Left colon (tissue), 2 donors: ENCODE measurements at regions of chr20 and their contacts with region 1.

Region 1: DNA sequence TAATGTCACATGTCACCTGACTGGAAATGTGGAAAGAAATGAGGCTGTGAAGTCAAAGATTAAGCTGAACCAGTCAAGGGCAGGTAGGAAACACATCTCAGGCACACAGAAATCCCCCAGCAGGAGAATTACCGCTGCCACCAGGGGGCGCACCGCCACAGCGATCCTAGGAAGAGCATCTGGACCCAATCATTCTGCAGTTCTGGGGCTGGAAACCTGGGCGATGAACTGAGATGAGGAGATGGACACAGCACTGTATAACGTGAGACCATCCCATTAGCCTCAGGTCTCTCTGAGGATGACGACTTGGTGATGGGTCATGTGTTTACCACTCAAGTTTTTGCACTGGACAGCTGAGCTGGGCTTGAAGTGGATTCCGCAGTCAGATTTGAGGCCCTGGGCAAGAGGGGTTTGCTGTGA is 6.5 kb upstream of the SLC24A3 start:
- DNase-seq: peak; percentile 51 to 85
- ATAC-seq: peak; percentile 90

Region 2: GRCh38 chr20:18750735-18751134 is 455.3 kb before region 1 on chr20:
- intact Hi-C with region 1: no loop called
- DNase-seq: no peak
- ATAC-seq: no peak

Region 3: DNA sequence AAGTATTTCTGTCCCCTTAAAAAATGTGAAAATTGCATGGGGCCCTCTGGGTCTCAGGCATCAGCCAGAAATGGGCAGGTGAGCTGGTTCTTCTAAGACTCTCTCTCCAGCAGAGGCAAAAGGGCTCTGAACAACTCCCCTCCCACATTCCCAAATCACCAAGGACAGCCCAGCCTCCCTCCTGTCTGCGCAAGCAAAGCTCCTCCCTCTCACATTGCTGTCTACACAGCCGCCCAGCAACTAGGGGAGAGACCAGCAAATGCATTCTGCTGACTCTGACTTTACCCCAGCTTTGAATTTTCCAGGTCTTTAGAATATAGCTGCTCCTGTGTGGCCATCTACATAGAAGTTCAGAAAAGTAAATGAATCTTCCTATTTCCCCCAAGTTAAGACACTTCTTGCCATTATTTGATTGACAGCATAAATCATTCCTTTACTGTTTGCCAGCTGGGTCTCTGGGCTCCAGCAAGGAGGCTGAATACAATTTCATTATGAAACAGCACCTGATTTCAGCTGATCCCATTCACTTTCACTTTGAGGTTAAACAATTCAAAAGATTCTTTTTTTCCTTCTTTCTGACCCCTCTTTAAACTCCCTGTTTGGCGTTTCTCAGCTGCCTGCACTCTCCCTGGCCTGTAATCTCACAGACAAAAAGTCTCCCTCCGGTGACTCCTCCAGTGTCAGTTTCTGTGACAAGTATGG is 346.3 kb after region 1 on chr20:
- intact Hi-C with region 1: no loop called
- DNase-seq: no peak
- ATAC-seq: no peak

Region 4: DNA sequence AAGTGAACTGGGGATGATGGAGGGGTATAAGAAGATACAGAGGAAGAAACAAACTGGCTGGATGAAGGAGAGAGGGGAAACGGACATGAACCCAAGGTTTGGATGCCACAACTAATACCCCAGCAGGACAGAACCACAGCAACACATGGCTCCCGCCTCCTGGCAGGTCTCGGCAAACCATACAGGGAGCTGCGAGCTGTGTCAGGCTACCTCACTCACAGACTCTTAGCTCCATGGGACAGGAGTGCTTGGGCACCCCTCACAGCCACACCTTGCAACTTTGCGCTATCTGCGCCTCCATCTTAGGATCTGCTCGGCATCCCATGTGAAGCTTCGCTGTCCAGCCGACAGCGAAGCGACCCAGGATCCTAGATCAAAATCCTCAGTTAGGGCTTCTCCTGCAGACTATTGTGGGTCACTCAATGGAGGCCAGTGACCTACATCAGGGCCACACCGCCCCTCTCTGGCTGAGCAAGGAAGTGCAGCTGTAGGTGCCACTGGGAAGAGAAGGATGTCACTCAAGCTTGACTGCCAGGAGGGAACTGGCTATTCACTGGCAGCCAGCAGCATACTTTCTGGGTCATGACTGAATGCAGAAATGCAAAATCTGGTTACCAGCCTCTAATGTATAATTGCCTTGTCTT is 377.7 kb after region 1 on chr20:
- intact Hi-C with region 1: loop called in 1 of 2 experiments (anchors 5 kb)
- DNase-seq: peak; percentile 32 to 76
- ATAC-seq: peak; percentile 81

Region 5: DNA sequence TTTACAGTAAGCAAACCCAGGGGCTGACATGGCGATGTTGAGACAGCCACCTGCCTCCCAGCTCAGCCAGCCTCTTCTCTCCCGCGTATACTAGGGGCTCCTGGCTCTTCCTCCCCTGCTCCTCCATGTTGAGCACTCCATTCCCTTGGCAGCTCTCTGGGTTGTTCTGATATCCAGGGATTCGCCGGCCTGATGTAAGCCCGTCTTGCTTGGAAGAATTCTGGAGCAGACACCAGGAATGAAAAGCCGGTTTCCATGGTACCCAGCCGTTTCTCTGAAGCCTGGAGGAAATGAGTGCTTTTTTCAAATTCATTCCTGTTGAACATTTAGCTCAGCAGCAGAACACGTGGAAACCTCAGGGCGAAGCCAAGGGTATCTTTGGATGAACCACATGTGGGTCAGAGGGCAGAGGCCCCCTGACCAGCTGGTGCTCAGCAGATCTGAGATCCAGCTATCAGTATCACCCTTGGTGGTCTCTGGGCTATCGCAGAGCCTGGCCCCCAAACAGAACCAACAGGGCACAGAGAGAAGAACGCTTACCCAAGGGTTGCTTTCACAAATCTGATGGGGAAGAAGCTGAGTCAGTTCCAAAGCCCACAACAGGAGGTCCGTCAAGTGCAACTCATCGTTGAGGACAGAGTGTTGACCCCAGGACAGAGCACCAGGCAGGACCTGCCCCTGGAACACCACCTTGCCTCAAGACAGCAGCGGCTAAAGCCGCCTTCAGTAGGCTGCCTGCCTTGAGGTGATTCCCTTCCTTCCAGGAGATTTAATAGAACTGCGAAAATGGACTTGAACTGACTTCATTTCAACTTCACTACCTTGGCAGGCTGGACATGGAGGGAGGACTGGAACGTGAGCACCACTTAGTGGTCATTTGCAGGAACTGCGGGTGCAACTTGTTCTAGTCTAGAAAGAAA is 456.0 kb after region 1 on chr20:
- intact Hi-C with region 1: loop called in 1 of 2 experiments (anchors 5 kb)
- DNase-seq: peak; percentile 42 to 66
- ATAC-seq: peak; percentile 74